Left cardiac atrium (tissue), 4 donors: ENCODE measurements at regions of chr2 and their contacts with region 1.

Region 1: DNA sequence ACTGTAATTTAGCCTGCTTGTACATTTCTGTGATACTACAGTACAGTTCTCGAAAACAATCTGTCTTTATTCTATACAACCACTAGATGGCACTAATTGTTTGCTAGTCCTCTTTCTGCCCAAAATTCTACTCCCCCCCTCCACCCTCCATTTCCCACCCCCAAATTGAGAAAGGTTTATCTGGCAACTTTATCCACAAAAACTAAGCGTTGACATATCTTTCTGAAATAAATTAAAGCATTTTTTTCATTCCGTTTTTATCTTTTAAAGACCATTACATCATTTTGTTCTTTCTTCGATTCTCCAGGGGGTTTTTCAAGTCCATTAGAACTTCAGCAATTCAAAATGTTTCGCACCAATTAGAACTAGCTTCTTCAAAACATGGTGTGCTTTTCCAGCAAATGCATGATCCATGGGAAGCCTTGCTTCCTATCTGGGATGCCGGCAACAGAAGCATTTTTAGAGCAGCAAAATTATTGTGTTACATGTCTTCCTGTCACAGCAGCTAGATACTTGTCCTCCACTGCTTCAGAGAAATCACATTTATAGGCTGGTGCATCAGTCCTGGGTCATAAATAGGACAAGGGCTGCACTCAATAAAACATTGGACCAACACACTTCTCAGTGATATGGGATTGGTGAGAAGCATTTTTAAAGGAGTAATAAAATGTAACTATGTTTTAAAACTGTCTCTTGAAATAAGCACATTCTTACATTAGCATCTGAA is 241.3 kb downstream of the PAX3 start:
- DNase-seq: no peak
- ATAC-seq: peak; percentile 34 to 53

Region 2: GRCh38 chr2:222305516-222306392 is 248.2 kb after region 1 on chr2:
- intact Hi-C with region 1: loop called (anchors 5 to 10 kb)
- DNase-seq: no peak
- ATAC-seq: peak in 1 of 2 donors; percentile 46

Region 3: GRCh38 chr2:222561817-222562645 is 504.5 kb after region 1 on chr2:
- intact Hi-C with region 1: loop called in 1 of 2 experiments (anchors 5 kb)
- DNase-seq: no peak
- ATAC-seq: peak; percentile 77 to 84

Region 4: GRCh38 chr2:222613715-222614331 is 556.3 kb after region 1 on chr2:
- intact Hi-C with region 1: loop called (anchors 5 to 10 kb)
- DNase-seq: no peak
- ATAC-seq: peak; percentile 56 to 57